Mammary epithelial cell (primary cell): ENCODE measurements at regions of chr11 and their contacts with region 1.

Region 1: DNA sequence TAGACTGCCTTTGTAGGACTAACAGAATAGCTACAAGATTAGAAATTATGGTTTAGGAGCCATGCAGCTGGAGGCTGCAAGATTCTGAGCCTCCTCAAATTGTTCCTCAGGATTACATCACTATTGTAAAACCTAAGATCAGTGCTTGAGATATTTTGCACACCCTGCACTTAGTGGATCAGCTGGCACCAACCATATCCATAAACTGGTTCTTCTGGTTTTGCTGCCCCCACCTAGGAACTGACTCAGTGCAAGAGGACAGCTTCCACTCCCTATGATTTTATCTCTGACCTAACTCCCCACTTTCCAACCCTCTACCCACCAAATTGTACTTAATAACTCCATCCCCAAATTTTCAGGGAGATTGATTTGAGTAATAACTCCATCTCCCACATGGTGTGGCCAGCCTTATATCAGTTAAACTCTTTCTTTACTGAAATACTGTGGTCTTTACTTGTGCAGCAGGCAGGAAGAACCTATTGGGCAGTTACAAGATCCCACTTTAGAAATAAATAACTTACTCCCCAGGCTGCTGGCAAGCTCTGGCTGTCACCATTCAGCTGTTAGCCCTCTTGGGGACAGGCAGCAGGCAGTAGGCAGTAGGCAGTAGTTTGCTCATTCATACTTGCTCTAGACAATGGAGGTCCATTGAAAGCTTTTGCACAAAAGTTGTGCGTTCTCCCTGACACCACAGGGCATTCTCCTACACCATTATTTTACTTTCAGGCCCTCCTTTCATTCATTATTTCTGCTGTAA is 119.0 kb downstream of the SLC17A6 start:
- DNase-seq: peak; percentile 89
- H3K4me3 ChIP-seq: no peak overlapping the region
- H3K27ac ChIP-seq: peak overlapping the region; percentile 95
- H3K4me1 ChIP-seq: peaks cover 44% of the 10 kb centered on the region
- H3K27me3 ChIP-seq: no peaks in the 10 kb centered on the region
- CTCF ChIP-seq: no peak

Region 2: GRCh38 chr11:22432291-22433093 is 24.7 kb before region 1 on chr11:
- CTCF ChIA-PET with region 1: no interaction called
- dilution Hi-C with region 1: no loop called
- in situ Hi-C with region 1: no loop called
- intact Hi-C with region 1: loop called (anchors 2 kb)
- DNase-seq: no peak
- H3K4me3 ChIP-seq: no peak overlapping the region
- H3K27ac ChIP-seq: no peak overlapping the region
- H3K4me1 ChIP-seq: no peaks in the 10 kb centered on the region
- H3K27me3 ChIP-seq: no peaks in the 10 kb centered on the region
- CTCF ChIP-seq: no peak